ENCODE measurements at regions of chr20 and their contacts with region 1.

Region 1: GRCh38 chr20:22232923-22233322 is 351.4 kb downstream of the FOXA2 start:
- DNase-seq: no peak
- ATAC-seq: no peak
- H3K4me3 Mint-ChIP-seq: no peak overlapping the region
- H3K27ac Mint-ChIP-seq: no peak overlapping the region
- H3K4me1 Mint-ChIP-seq: no peaks in the 10 kb centered on the region
- H3K27me3 Mint-ChIP-seq: peaks cover 2% of the 10 kb centered on the region

Region 2: DNA sequence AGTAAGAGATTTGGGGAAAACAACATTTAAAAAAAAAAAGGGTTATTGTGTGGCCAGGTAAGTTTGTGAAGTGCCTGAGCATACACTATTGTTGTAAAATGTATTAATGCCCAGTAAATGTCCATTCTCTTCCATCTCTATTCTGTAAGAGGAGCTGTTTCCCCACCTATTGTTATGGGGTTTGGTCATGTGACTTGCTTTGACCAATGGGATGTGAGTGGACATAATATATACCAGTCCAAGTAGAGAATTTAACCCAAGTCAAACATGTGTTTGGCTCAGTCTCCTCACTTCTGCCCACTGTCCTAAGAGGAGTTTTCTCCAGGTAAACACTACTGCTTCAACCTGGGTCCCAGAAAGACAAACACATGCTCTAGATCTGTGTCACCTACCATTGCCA is 25.6 kb before region 1 on chr20:
- CTCF ChIA-PET with region 1: no interaction called
- POLR2A ChIA-PET with region 1: no interaction called
- intact Hi-C with region 1: no loop called
- DNase-seq: no peak
- ATAC-seq: no peak
- H3K4me3 Mint-ChIP-seq: no peak overlapping the region
- H3K27ac Mint-ChIP-seq: no peak overlapping the region
- H3K4me1 Mint-ChIP-seq: no peaks in the 10 kb centered on the region
- H3K27me3 Mint-ChIP-seq: no peaks in the 10 kb centered on the region

Region 3: GRCh38 chr20:22248051-22248667 is 15.2 kb after region 1 on chr20:
- CTCF ChIA-PET with region 1: no interaction called
- POLR2A ChIA-PET with region 1: no interaction called
- intact Hi-C with region 1: no loop called
- DNase-seq: peak; percentile 5
- ATAC-seq: no peak
- H3K4me3 Mint-ChIP-seq: no peak overlapping the region
- H3K27ac Mint-ChIP-seq: no peak overlapping the region
- H3K4me1 Mint-ChIP-seq: no peaks in the 10 kb centered on the region
- H3K27me3 Mint-ChIP-seq: peaks cover 3% of the 10 kb centered on the region

Region 4: DNA sequence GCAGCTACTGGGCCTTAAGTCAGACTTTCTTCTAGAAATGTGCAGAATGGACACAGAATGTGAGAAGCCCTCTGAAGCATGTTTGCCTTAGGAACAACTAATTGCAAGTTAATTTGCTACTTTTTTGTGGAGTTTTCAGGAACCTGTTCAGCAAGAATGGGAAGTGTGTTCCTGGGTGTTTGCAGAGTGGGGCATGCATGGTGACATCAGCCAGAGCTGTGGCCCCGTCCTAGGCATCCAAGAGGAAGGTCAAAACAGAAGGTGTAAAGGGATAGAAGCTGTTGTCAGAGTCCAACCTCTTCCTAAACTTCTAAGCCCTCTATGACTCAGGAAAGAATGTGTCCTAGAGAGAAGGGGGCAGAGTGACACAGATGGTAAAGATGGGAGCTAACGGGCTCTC is 63.1 kb after region 1 on chr20:
- CTCF ChIA-PET with region 1: no interaction called
- POLR2A ChIA-PET with region 1: no interaction called
- intact Hi-C with region 1: loop called in 1 of 2 experiments (anchors 10 kb)
- DNase-seq: no peak
- ATAC-seq: no peak
- H3K4me3 Mint-ChIP-seq: no peak overlapping the region
- H3K27ac Mint-ChIP-seq: no peak overlapping the region
- H3K4me1 Mint-ChIP-seq: no peaks in the 10 kb centered on the region
- H3K27me3 Mint-ChIP-seq: no peaks in the 10 kb centered on the region